ENCODE measurements at regions of chr5 and their contacts with region 1.

Region 1: GRCh38 chr5:139648205-139649081 is at the start of gene CXXC5:
- DNase-seq: peak; percentile 91
- ATAC-seq: peak; percentile 77
- total RNA-seq, gene CXXC5: 67.3 TPM

Region 2: GRCh38 chr5:139543423-139543991 is 104.9 kb before region 1 on chr5:
- intact Hi-C with region 1: no loop called
- DNase-seq: peak; percentile 83
- ATAC-seq: peak; percentile 99

Region 3: DNA sequence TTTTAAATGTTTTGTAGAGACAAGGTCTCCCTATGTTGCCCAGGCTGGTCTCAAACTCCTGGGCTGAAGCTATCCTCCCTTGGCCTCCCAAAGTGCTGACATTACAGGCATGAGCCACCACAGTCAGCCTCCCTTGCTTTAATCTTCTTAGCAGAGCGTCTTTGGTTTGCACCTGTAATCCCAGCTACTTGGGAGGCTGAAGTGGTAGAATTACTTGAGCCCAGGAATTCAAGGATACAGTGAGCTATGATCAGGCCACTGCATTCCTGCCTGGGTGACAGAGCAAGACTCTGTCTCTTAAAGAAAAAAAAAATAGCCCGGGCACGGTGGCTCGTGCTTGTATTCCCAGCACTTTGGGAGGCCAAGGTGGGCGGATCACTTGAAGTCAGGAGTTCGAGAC is 59.5 kb before region 1 on chr5:
- intact Hi-C with region 1: no loop called
- DNase-seq: no peak
- ATAC-seq: no peak

Region 4: GRCh38 chr5:139684881-139685749 is 36.7 kb after region 1 on chr5:
- intact Hi-C with region 1: loop called (anchors 5 kb)
- DNase-seq: peak; percentile 67
- ATAC-seq: peak; percentile 66

Region 5: GRCh38 chr5:139765409-139766217 is 117.2 kb after region 1 on chr5:
- intact Hi-C with region 1: no loop called
- DNase-seq: peak; percentile 90
- ATAC-seq: peak; percentile 96

Measured in Right ventricle myocardium superior (tissue), 1 donor.